ENCODE measurements at regions of chr11 and their contacts with region 1.

Region 1: DNA sequence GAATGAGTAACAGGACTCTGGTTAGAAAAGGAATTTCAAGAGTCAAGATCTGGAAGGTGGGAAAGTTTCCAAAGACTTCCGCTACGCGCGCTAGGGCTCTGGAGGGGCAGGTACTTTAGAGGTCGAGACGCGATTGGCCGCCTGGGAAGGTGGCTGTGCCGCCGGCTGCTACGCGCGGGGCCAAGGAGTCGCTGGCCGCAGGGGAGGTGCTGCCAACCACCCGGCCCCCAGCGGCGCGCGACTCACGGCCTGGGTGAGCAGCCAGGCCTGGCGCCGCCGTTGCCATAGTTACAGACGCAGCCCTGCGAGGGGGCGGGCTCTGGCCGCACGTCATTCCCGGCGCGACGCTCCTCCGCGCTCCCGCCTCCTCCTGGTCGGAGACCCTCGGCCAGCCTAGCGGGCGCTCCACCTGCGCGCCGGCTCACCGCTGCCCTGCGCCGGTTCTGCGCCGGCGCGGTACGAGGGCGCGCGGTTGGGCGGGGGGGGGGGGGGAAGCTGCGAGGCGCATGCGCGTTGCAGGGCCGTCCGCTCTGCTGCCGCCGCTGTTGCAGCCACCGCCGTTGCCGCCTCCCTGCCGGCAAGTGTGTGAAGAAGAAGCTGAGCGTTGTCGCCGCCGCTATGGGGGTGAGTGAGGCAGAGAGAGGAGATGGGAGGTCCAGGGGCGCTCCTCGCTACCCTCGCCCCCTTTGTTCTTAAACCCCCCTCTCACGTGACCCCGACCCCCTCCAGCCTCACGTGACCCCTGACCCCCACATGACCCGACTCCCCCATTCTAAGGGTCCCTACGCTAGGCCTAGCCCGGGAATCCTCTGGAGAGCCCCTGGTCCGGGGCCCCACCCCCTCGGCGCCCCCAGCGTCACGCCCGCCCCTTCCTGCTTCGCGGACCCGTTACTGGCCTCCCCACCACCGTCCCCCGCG is at the start of gene NAA40:
- DNase-seq: peak; percentile 77 to 98 (median 90)
- ATAC-seq: peak; percentile 84
- H3K4me3 ChIP-seq: peak within 1 kb of the TSS; percentile 66 to 73
- H3K4me3 Mint-ChIP-seq: peak within 1 kb of the TSS; percentile 90
- H3K27ac ChIP-seq: peak within 1 kb of the TSS; percentile 49 to 78
- H3K27ac Mint-ChIP-seq: peak within 1 kb of the TSS; percentile 79
- H3K4me1 ChIP-seq: peaks cover 15% of the 10 kb centered on the region
- H3K4me1 Mint-ChIP-seq: peaks cover 29% of the 10 kb centered on the region
- H3K27me3 ChIP-seq: no peaks in the 10 kb centered on the region
- H3K27me3 Mint-ChIP-seq: no peaks in the 10 kb centered on the region
- CTCF ChIP-seq: no peak
- total RNA-seq, gene NAA40: 12.0 to 14.6 TPM

Region 2: GRCh38 chr11:63866211-63866610 is 72.5 kb before region 1 on chr11:
- CTCF ChIA-PET with region 1: no interaction called
- POLR2A ChIA-PET with region 1: no interaction called
- intact Hi-C with region 1: loop called in 1 of 2 experiments (anchors 1 kb)
- DNase-seq: peak; percentile 42 to 92 (median 77)
- ATAC-seq: peak; percentile 70
- H3K4me3 ChIP-seq: no peak overlapping the region
- H3K4me3 Mint-ChIP-seq: peak overlapping the region; percentile 58
- H3K27ac ChIP-seq: peak overlapping the region in 1 of 2 experiments; percentile 49
- H3K27ac Mint-ChIP-seq: peak overlapping the region; percentile 79
- H3K4me1 ChIP-seq: peaks cover 74% of the 10 kb centered on the region
- H3K4me1 Mint-ChIP-seq: peaks cover 80% of the 10 kb centered on the region
- H3K27me3 ChIP-seq: no peaks in the 10 kb centered on the region
- H3K27me3 Mint-ChIP-seq: no peaks in the 10 kb centered on the region
- CTCF ChIP-seq: no peak

Region 3: GRCh38 chr11:63888170-63889086 is 50.3 kb before region 1 on chr11:
- CTCF ChIA-PET with region 1: no interaction called
- POLR2A ChIA-PET with region 1: no interaction called
- intact Hi-C with region 1: loop called (anchors 1 kb)
- DNase-seq: peak; percentile 49 to 87 (median 76)
- ATAC-seq: peak; percentile 85
- H3K4me3 ChIP-seq: peak overlapping the region; percentile 67 to 72
- H3K4me3 Mint-ChIP-seq: peak overlapping the region; percentile 96
- H3K27ac ChIP-seq: peak overlapping the region; percentile 47 to 87
- H3K27ac Mint-ChIP-seq: peak overlapping the region; percentile 92
- H3K4me1 ChIP-seq: peaks cover 62% of the 10 kb centered on the region
- H3K4me1 Mint-ChIP-seq: peaks cover 83% of the 10 kb centered on the region
- H3K27me3 ChIP-seq: no peaks in the 10 kb centered on the region
- H3K27me3 Mint-ChIP-seq: no peaks in the 10 kb centered on the region
- CTCF ChIP-seq: no peak

Region 4: GRCh38 chr11:63916837-63917691 is 21.7 kb before region 1 on chr11 and contains the start of gene RCOR2:
- CTCF ChIA-PET with region 1: interaction called, 7 read pairs
- POLR2A ChIA-PET with region 1: no interaction called
- intact Hi-C with region 1: loop called in 1 of 2 experiments (anchors 2 kb)
- DNase-seq: peak in 8 of 9 experiments; percentile 32 to 78 (median 58)
- ATAC-seq: peak; percentile 65
- H3K4me3 ChIP-seq: peak within 1 kb of the TSS; percentile 47 to 48
- H3K4me3 Mint-ChIP-seq: peak within 1 kb of the TSS; percentile 85
- H3K27ac ChIP-seq: no peak within 1 kb of the TSS
- H3K27ac Mint-ChIP-seq: no peak within 1 kb of the TSS
- H3K4me1 ChIP-seq: peaks cover 28% of the 10 kb centered on the region
- H3K4me1 Mint-ChIP-seq: peaks cover 15% of the 10 kb centered on the region
- H3K27me3 ChIP-seq: no peaks in the 10 kb centered on the region
- H3K27me3 Mint-ChIP-seq: no peaks in the 10 kb centered on the region
- CTCF ChIP-seq: no peak
- total RNA-seq, gene RCOR2: not detected

Region 5: GRCh38 chr11:63974259-63975143 is 35.8 kb after region 1 on chr11 and contains the start of gene COX8A:
- CTCF ChIA-PET with region 1: no interaction called
- POLR2A ChIA-PET with region 1: no interaction called
- intact Hi-C with region 1: loop called (anchors 1 kb)
- DNase-seq: peak; percentile 89 to 100 (median 90)
- ATAC-seq: peak; percentile 99
- H3K4me3 ChIP-seq: peak within 1 kb of the TSS; percentile 97 to 99
- H3K4me3 Mint-ChIP-seq: peak within 1 kb of the TSS; percentile 100
- H3K27ac ChIP-seq: peak within 1 kb of the TSS; percentile 86 to 97
- H3K27ac Mint-ChIP-seq: peak within 1 kb of the TSS; percentile 99
- H3K4me1 ChIP-seq: peaks cover 16% of the 10 kb centered on the region
- H3K4me1 Mint-ChIP-seq: peaks cover 30% of the 10 kb centered on the region
- H3K27me3 ChIP-seq: no peaks in the 10 kb centered on the region
- H3K27me3 Mint-ChIP-seq: peaks cover 3% of the 10 kb centered on the region
- CTCF ChIP-seq: no peak
- total RNA-seq, gene COX8A: 97.6 to 111 TPM

Region 6: DNA sequence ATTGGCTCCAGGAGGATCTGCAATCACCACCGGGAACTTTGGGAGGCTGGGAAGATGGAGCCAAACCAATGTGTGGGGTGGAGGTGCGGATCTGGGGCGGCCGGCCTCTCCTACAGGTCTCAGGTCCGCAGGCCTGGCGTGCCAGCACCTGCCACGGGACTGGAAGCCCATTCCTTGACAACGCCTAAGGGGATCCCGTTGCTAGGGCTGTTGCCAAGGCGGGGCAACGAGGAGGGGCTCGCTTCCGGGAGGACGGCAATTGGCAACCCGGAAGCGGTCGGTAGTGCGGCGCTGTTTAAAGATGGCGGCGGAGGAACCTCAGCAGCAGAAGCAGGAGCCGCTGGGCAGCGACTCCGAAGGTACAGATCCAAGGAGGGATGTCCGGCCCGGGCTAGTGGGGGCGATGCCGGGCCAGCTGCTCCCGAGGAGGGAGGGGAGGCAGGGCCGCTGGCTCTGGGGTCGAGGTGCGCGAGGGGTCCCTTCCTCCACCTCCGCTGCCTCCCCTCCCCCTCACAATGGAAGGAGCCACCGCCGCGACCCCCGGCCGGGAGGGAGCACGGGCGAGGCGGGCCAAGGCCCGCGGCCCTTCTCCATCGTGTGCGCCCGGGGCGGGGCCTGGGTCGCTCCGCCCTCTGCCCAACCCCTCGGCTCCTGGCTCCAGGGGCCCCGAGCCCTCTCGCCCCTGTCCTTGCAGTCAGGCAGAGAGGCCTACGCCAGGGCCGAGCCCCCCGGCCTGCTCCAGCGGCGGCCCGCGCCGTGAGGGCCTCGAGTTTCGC is 47.6 kb after region 1 on chr11 and contains the start of gene OTUB1:
- CTCF ChIA-PET with region 1: no interaction called
- POLR2A ChIA-PET with region 1: no interaction called
- intact Hi-C with region 1: loop called (anchors 1 kb)
- DNase-seq: peak; percentile 61 to 93 (median 86)
- ATAC-seq: peak; percentile 85
- H3K4me3 ChIP-seq: peak within 1 kb of the TSS; percentile 65 to 93
- H3K4me3 Mint-ChIP-seq: peak within 1 kb of the TSS; percentile 98
- H3K27ac ChIP-seq: peak within 1 kb of the TSS; percentile 83 to 94
- H3K27ac Mint-ChIP-seq: peak within 1 kb of the TSS; percentile 97
- H3K4me1 ChIP-seq: peaks cover 22% of the 10 kb centered on the region
- H3K4me1 Mint-ChIP-seq: peaks cover 28% of the 10 kb centered on the region
- H3K27me3 ChIP-seq: no peaks in the 10 kb centered on the region
- H3K27me3 Mint-ChIP-seq: no peaks in the 10 kb centered on the region
- CTCF ChIP-seq: no peak
- total RNA-seq, gene OTUB1: 67.2 to 68.7 TPM

Region 7: GRCh38 chr11:64021757-64022093 is 83.0 kb after region 1 on chr11:
- CTCF ChIA-PET with region 1: no interaction called
- POLR2A ChIA-PET with region 1: no interaction called
- intact Hi-C with region 1: no loop called
- DNase-seq: no peak
- ATAC-seq: no peak
- H3K4me3 ChIP-seq: no peak overlapping the region
- H3K4me3 Mint-ChIP-seq: no peak overlapping the region
- H3K27ac ChIP-seq: no peak overlapping the region
- H3K27ac Mint-ChIP-seq: no peak overlapping the region
- H3K4me1 ChIP-seq: no peaks in the 10 kb centered on the region
- H3K4me1 Mint-ChIP-seq: no peaks in the 10 kb centered on the region
- H3K27me3 ChIP-seq: no peaks in the 10 kb centered on the region
- H3K27me3 Mint-ChIP-seq: no peaks in the 10 kb centered on the region
- CTCF ChIP-seq: no peak

Region 8: DNA sequence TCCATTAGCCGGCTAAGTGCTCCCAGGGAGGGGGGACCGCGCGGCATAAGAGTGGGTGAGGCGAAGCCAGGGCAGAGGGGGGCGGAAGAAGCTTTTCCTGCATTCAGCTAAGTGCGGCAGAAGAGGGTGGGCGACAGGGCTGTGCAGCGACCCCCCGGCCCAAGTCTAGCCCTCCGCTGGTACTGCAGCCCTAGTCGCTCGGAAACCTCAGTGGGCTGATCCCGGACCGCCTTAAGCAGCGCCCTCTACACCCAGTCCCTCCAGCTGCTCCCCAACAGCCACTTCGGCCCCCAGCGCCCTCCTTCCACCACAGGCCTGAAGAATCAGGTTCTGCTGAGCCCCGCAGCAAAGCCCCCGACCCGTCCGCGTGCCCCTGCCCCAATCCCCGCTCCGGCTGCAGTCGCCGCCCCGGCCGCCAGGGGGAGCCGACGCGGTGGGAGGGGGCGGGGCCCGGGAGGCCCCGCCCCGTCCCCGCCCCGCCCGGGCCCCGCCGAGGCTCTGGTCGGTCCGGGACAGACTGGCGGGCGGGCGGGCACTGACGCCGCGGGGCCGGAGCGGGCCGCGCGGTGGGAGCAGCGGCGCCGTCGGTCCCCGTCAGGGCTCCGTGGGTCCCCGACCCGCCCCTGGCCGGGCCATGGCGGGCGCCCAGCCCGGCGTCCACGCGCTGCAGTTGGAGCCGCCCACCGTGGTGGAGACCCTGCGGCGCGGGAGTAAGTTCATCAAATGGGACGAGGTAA is 312.4 kb after region 1 on chr11 and contains the start of gene PLCB3:
- CTCF ChIA-PET with region 1: no interaction called
- POLR2A ChIA-PET with region 1: no interaction called
- intact Hi-C with region 1: no loop called
- DNase-seq: peak in 8 of 9 experiments; percentile 44 to 87 (median 68)
- ATAC-seq: peak; percentile 74
- H3K4me3 ChIP-seq: peak within 1 kb of the TSS; percentile 53 to 68
- H3K4me3 Mint-ChIP-seq: peak within 1 kb of the TSS; percentile 85
- H3K27ac ChIP-seq: no peak within 1 kb of the TSS
- H3K27ac Mint-ChIP-seq: no peak within 1 kb of the TSS
- H3K4me1 ChIP-seq: peaks cover 24% of the 10 kb centered on the region
- H3K4me1 Mint-ChIP-seq: peaks cover 22% of the 10 kb centered on the region
- H3K27me3 ChIP-seq: no peaks in the 10 kb centered on the region
- H3K27me3 Mint-ChIP-seq: no peaks in the 10 kb centered on the region
- CTCF ChIP-seq: peak; percentile 63
- total RNA-seq, gene PLCB3: 2.1 to 2.4 TPM

Region 9: DNA sequence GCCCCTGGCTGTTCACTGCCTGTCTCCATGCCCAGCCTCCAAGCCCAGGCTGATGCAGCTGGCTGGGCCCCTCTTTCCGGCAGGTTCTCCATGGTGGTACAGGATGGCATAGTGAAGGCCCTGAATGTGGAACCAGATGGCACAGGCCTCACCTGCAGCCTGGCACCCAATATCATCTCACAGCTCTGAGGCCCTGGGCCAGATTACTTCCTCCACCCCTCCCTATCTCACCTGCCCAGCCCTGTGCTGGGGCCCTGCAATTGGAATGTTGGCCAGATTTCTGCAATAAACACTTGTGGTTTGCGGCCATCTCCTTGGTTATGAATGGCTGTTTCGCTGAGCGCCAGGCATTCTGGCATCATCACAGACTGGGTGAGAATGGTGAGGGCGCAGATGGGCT is 382.8 kb after region 1 on chr11:
- CTCF ChIA-PET with region 1: no interaction called
- POLR2A ChIA-PET with region 1: no interaction called
- intact Hi-C with region 1: no loop called
- DNase-seq: no peak
- ATAC-seq: no peak
- H3K4me3 ChIP-seq: no peak overlapping the region
- H3K4me3 Mint-ChIP-seq: no peak overlapping the region
- H3K27ac ChIP-seq: no peak overlapping the region
- H3K27ac Mint-ChIP-seq: no peak overlapping the region
- H3K4me1 ChIP-seq: peaks cover 8% of the 10 kb centered on the region
- H3K4me1 Mint-ChIP-seq: peaks cover 29% of the 10 kb centered on the region
- H3K27me3 ChIP-seq: no peaks in the 10 kb centered on the region
- H3K27me3 Mint-ChIP-seq: no peaks in the 10 kb centered on the region
- CTCF ChIP-seq: no peak